ENCODE measurements at regions of chr3 and their contacts with region 1.

Region 1: GRCh38 chr3:39189959-39190269 is 2.5 kb downstream of the XIRP1 start:
- DNase-seq: peak; percentile 68 to 84 (median 76)
- H3K4me3 ChIP-seq: no peak overlapping the region
- H3K27ac ChIP-seq: no peak overlapping the region
- H3K4me1 ChIP-seq: peaks cover 0 to 4% (median under 1%) of the 10 kb centered on the region in 4 experiments
- H3K27me3 ChIP-seq: no peaks in the 10 kb centered on the region

Region 2: DNA sequence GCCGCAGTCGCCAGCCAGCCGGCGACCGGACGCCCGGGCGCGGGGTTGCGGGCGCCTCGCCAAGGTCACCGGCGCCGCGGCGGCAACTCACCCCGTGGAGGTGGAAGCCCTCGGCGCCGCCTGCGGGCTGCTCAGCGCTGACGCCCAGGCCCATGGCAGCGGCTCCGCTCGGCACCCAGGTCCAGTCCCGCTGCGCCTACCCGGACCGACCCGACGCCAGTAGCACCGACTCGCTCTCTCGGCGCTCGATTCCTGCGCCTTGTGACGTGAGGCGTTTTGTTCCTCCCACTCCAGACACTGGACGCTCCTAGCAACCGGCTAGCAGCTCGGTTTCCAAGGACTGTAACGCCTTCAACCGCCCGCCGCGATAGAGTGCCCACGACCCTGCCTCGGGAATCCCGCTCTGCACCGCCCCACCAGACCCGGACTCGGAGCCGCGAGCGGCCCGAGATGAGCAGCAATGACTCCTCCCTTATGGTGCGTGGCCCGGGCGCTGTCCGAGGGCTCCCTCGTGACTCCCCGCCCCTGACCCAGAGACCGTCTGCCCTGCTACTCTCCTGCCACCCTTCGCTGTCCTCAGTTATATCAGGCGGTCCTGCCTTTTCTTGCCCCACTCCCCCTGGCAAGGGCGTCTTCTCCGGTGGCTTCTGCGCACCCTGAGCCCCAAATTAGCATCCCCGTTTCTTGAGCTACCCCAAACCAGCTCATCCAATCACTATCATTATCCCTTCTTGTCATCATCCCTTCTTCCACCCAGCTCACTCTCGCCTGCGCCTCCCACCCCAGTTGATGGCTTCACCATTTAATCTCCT is 82.3 kb before region 1 on chr3 and contains the starts of genes GORASP1 and TTC21A:
- CTCF ChIA-PET with region 1: interaction called, 26 read pairs
- POLR2A ChIA-PET with region 1: no interaction called
- DNase-seq: peak; percentile 80 to 89 (median 85)
- H3K4me3 ChIP-seq: peak within 1 kb of the TSS; percentile 73 to 94 (median 85)
- H3K27ac ChIP-seq: peak within 1 kb of the TSS; percentile 37 to 71
- H3K4me1 ChIP-seq: peaks cover 2 to 35% (median 25%) of the 10 kb centered on the region in 4 experiments
- H3K27me3 ChIP-seq: no peaks in the 10 kb centered on the region

Region 3: GRCh38 chr3:39208463-39209055 is 18.6 kb after region 1 on chr3:
- CTCF ChIA-PET with region 1: interaction called, 58 read pairs
- POLR2A ChIA-PET with region 1: no interaction called
- DNase-seq: peak; percentile 49 to 60 (median 53)
- H3K4me3 ChIP-seq: no peak overlapping the region
- H3K27ac ChIP-seq: no peak overlapping the region
- H3K4me1 ChIP-seq: peaks cover 0 to 14% (median 4%) of the 10 kb centered on the region in 4 experiments
- H3K27me3 ChIP-seq: no peaks in the 10 kb centered on the region

Region 4: DNA sequence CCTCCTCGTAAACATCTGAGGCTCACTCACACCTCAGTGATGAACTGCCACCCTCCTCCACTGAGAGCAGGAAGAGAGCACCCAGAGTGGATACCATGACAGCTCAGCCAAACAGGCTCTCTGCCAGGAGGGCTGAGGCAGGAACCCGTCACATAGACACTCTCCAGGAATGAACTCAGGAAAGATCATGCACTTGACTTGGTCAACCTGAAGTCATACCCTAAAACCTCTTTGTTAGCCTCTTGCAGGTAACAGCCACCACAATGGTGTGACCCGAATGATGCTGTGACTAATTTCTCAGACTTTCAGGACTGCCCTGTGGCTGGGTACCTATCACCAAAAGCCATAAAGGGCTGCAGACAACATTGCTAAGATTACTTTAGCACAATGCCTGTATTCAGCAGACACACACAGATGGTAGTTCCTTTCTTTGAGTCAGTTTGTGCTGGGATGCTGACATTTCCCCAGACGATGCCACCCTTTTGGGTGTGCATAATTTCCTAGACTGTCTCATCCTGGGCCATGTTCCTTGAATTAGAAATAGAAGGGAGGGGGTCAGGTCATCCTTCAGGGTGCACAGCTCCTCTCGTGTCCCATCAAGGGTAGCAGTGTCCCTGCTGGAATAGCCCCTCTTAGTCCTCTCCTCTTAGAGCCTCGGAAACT is 59.7 kb after region 1 on chr3:
- CTCF ChIA-PET with region 1: interaction called, 13 read pairs
- POLR2A ChIA-PET with region 1: no interaction called
- DNase-seq: peak in 1 of 3 donors; percentile 50
- H3K4me3 ChIP-seq: peak overlapping the region in 4 of 7 experiments; percentile 33 to 64 (median 40)
- H3K27ac ChIP-seq: no peak overlapping the region
- H3K4me1 ChIP-seq: peaks cover 18 to 62% (median 51%) of the 10 kb centered on the region in 4 experiments
- H3K27me3 ChIP-seq: no peaks in the 10 kb centered on the region

Region 5: GRCh38 chr3:39267631-39268548 is 78.0 kb after region 1 on chr3:
- CTCF ChIA-PET with region 1: interaction called, 62 read pairs
- POLR2A ChIA-PET with region 1: no interaction called
- DNase-seq: peak in 2 of 3 donors; percentile 63 to 73
- H3K4me3 ChIP-seq: no peak overlapping the region
- H3K27ac ChIP-seq: no peak overlapping the region
- H3K4me1 ChIP-seq: peaks cover 0 to 30% (median 7%) of the 10 kb centered on the region in 4 experiments
- H3K27me3 ChIP-seq: no peaks in the 10 kb centered on the region

Measured in common myeloid progenitor, CD34-positive (primary cell).